Transverse colon (tissue), 4 donors: ENCODE measurements at regions of chr16 and their contacts with region 1.

Region 1: GRCh38 chr16:46555951-46556350 is 65.2 kb downstream of the SHCBP1 start:
- DNase-seq: no peak
- H3K4me3 ChIP-seq: no peak overlapping the region
- H3K27ac ChIP-seq: no peak overlapping the region
- H3K4me1 ChIP-seq: no peaks in the 10 kb centered on the region
- H3K27me3 ChIP-seq: no peaks in the 10 kb centered on the region
- CTCF ChIP-seq: no peak
- EP300 ChIP-seq: no peak
- POLR2A ChIP-seq: no peak

Region 2: DNA sequence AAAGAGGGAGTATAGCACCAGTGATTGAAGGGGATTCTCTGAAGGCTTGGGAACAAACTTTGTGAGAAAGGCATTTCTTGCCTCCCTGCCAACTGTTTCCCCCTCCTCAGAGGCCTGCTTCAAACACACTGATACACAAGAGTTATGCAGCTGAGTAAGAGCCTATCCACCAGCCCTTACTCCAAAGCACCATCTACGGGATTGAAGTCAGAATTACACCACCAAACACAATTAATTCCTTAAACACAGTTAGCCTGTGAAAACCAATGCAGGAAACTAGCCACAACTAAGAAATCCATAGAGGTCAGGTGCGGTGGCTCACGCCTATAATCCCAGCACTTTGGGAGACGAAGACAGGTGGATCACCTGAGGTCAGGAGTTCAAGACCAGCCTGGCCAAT is 73.1 kb before region 1 on chr16:
- in situ Hi-C with region 1: no loop called
- intact Hi-C with region 1: loop called (anchors 2 kb)
- DNase-seq: no peak
- H3K4me3 ChIP-seq: no peak overlapping the region
- H3K27ac ChIP-seq: no peak overlapping the region
- H3K4me1 ChIP-seq: no peaks in the 10 kb centered on the region
- H3K27me3 ChIP-seq: no peaks in the 10 kb centered on the region
- CTCF ChIP-seq: no peak
- EP300 ChIP-seq: no peak
- POLR2A ChIP-seq: no peak

Region 3: GRCh38 chr16:46607529-46607928 is 51.6 kb after region 1 on chr16:
- in situ Hi-C with region 1: loop called in 1 of 4 experiments (anchors 10 kb)
- intact Hi-C with region 1: no loop called
- DNase-seq: no peak
- H3K4me3 ChIP-seq: no peak overlapping the region
- H3K27ac ChIP-seq: no peak overlapping the region
- H3K4me1 ChIP-seq: no peaks in the 10 kb centered on the region
- H3K27me3 ChIP-seq: no peaks in the 10 kb centered on the region
- CTCF ChIP-seq: peak; percentile 18 to 39 (median 34)
- EP300 ChIP-seq: no peak
- POLR2A ChIP-seq: no peak